Activated T-helper 2 cell treated with anti-CD3 and anti-CD28 coated beads, Interferon-gamma antibody, Interleukin-2, Interleukin-4, amounts not matched to agents 10 μg/mL and 5 μg/mL and 100 μg/mL, durations not matched to agents 14 hours and 24 hours and 36 hours (primary cell): ENCODE measurements at regions of chr3 and their contacts with region 1.

Region 1: GRCh38 chr3:31981206-31982181 is at the starts of genes OSBPL10 and ZNF860:
- DNase-seq: no peak
- H3K4me3 Mint-ChIP-seq: peak within 1 kb of the TSS; percentile 86
- H3K27ac Mint-ChIP-seq: peak within 1 kb of the TSS; percentile 65
- H3K4me1 Mint-ChIP-seq: peaks cover 21% of the 10 kb centered on the region
- H3K27me3 Mint-ChIP-seq: peaks cover 36% of the 10 kb centered on the region
- total RNA-seq, gene OSBPL10: 42.5 and 47.6 TPM in 2 replicates
- total RNA-seq, gene ZNF860: 1.8 and 2.0 TPM in 2 replicates

Region 2: DNA sequence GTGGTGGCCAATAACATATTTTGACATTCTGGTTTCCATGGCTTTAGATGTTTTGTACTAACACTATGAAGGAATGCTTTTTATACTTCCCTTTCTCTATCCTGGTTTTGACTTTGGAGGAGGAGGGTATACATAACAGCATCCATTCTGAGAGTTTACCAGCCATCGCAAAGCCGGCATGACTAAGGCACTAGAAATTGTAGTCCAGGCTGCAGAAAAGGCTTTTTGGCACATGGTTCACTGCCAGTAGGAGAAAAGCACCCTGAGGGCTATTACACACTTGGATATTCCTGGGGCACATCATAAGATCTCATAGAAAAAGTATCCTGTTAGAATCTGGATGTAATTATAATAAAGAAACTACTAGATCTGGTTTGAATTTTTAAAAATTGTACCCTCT is 347.0 kb before region 1 on chr3:
- intact Hi-C with region 1: loop called (anchors 10 kb)
- DNase-seq: no peak
- H3K4me3 Mint-ChIP-seq: no peak overlapping the region
- H3K27ac Mint-ChIP-seq: peak overlapping the region; percentile 38
- H3K4me1 Mint-ChIP-seq: peaks cover 36% of the 10 kb centered on the region
- H3K27me3 Mint-ChIP-seq: no peaks in the 10 kb centered on the region

Region 3: GRCh38 chr3:31768479-31769123 is 212.9 kb before region 1 on chr3:
- intact Hi-C with region 1: loop called (anchors 1 kb)
- DNase-seq: peak; percentile 36
- H3K4me3 Mint-ChIP-seq: no peak overlapping the region
- H3K27ac Mint-ChIP-seq: peak overlapping the region; percentile 33
- H3K4me1 Mint-ChIP-seq: peaks cover 57% of the 10 kb centered on the region
- H3K27me3 Mint-ChIP-seq: no peaks in the 10 kb centered on the region

Region 4: DNA sequence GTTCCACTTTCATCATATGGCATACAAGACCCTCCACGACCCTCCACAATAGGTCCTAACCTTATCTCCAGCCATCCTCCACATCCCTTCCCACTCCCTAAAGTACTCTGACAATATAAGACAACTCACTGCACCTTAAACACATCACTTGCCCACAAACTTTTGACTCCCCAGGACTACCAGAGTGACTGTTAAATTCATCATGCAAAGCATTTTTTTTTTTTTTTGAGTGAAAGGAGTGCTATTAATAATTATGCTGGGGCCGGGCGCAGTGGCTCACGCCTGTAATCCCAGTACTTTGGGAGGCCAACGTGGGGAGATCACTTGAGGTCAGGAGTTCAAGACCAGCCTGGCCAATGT is 56.2 kb before region 1 on chr3:
- intact Hi-C with region 1: loop called (anchors 1 kb)
- DNase-seq: no peak
- H3K4me3 Mint-ChIP-seq: no peak overlapping the region
- H3K27ac Mint-ChIP-seq: peak overlapping the region; percentile 65
- H3K4me1 Mint-ChIP-seq: peaks cover 38% of the 10 kb centered on the region
- H3K27me3 Mint-ChIP-seq: no peaks in the 10 kb centered on the region

Region 5: GRCh38 chr3:31996195-31996594 is 14.7 kb after region 1 on chr3:
- intact Hi-C with region 1: loop called (anchors 1 kb)
- DNase-seq: no peak
- H3K4me3 Mint-ChIP-seq: no peak overlapping the region
- H3K27ac Mint-ChIP-seq: peak overlapping the region; percentile 42
- H3K4me1 Mint-ChIP-seq: peaks cover 34% of the 10 kb centered on the region
- H3K27me3 Mint-ChIP-seq: no peaks in the 10 kb centered on the region

Region 6: GRCh38 chr3:32037929-32038267 is 56.4 kb after region 1 on chr3:
- intact Hi-C with region 1: no loop called
- DNase-seq: no peak
- H3K4me3 Mint-ChIP-seq: no peak overlapping the region
- H3K27ac Mint-ChIP-seq: no peak overlapping the region
- H3K4me1 Mint-ChIP-seq: no peaks in the 10 kb centered on the region
- H3K27me3 Mint-ChIP-seq: peaks cover 12% of the 10 kb centered on the region

Region 7: DNA sequence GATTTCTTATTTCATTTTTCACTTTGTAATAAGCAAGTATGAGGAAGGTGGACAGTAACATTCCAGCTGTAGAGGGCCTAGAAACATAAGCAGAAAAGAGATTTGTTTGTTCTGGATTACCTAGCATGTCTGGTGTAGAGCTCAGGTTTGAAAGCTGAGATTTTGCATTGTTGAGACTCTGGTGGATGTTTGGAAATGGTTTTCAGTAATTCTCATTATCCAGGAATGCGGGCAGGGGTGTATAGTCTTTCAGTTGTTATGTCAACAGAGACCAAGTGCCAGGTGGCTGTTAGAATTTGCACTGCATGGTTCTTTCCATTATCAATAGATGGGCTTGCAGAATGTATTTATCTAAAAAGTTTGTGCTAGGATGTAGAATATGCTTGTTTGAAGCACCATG is 135.8 kb after region 1 on chr3:
- intact Hi-C with region 1: loop called (anchors 10 kb)
- DNase-seq: no peak
- H3K4me3 Mint-ChIP-seq: no peak overlapping the region
- H3K27ac Mint-ChIP-seq: no peak overlapping the region
- H3K4me1 Mint-ChIP-seq: peaks cover 41% of the 10 kb centered on the region
- H3K27me3 Mint-ChIP-seq: peaks cover 2% of the 10 kb centered on the region